ENCODE measurements at regions of chr12 and their contacts with region 1.

Region 1: DNA sequence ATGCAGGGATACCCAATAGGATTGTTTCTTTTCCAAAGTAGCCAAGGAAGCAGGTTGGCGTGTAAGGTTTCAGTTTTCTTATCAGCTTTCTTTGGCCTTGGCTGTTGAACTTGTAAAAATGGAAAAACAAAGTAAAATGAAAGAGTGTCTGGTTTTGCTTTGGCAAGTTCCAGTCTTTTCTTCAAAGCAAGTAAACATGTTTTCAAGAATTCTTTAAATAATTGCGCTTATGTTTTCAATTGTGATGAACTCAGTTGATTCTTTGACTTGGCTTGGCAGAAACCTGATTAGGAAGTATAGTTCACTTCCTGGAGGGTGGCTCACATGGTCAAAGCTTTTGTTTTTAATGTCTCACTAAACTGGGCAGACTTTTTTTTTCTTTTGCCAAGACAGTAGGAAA is 112.2 kb upstream of the USP44 start:
- DNase-seq: peak; percentile 97
- H3K4me3 ChIP-seq: peak overlapping the region in 2 of 3 experiments; percentile 56 to 67
- H3K27ac ChIP-seq: peak overlapping the region; percentile 93
- H3K4me1 ChIP-seq: peaks cover 26% of the 10 kb centered on the region
- H3K27me3 ChIP-seq: no peaks in the 10 kb centered on the region
- CTCF ChIP-seq: no peak
- POLR2A ChIP-seq: peak; percentile 41

Region 2: DNA sequence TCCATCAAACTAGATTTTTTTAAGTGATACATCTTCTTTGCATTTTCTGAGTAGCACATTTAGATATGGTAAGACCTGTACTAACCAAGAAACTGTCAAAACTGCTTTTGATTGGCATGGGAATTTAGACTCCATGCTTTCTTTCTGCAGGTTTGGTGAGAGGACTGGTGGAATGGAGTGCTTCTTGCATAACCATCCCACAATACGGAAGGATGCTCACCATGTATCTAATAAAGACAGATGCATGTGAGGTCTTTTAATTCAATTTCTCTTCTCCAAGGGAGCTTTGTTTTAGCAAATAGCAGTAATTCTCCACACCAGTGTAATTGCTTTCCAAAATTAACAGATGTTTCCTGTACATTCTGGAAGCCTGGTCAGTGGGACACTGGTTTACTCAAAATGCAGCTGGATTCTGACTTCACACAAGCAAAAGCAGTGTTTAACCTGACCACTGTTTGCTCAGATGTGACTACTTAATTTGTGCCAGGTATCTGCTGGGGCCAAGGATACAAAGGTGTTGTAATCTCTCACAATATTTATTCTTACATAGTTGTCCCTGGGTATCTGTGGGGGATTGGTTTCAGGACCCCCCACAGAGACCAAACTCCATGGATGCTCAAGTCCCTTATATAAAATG is 472.3 kb before region 1 on chr12:
- CTCF ChIA-PET with region 1: no interaction called
- POLR2A ChIA-PET with region 1: no interaction called
- dilution Hi-C with region 1: no loop called
- intact Hi-C with region 1: no loop called
- DNase-seq: peak; percentile 62
- H3K4me3 ChIP-seq: no peak overlapping the region
- H3K27ac ChIP-seq: no peak overlapping the region
- H3K4me1 ChIP-seq: peaks cover 3% of the 10 kb centered on the region
- H3K27me3 ChIP-seq: no peaks in the 10 kb centered on the region
- CTCF ChIP-seq: no peak
- POLR2A ChIP-seq: no peak

Region 3: DNA sequence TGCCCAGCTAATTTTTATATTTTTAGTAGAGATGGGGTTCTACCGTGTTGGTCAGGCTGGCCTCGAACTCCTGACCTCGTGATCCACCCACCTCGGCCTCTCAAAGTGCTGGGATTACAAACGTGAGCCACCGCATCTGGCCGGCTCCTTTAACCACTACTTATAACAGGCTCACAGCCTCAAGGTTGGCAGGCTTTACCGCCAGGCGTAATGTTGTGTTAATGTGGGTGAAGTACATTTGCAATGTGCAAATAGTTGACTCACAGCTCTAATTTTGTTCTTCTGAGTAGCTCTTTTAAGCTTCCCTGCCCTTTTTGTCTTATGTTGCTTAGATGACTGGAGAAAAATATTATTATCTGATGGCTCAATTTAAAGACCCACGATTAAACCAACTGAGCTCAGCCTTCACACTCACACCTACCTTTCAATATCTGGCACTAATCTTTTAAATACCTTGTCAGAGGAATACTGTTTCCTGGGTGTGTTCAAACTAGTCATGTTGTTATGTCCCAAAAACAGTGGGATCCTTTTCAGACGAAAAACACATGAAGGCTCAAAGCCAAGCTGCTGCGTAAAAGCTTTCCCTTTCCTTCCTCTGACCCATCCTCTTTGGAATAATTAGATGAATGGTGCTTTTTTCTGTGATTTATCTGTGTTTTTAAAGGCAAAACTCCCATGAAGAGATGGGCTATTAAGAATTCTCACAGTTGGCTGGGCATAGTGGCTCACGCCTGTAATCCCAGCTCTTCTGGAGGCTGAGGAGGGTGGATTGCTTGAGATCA is 55.1 kb before region 1 on chr12:
- CTCF ChIA-PET with region 1: interaction called, 4 read pairs
- POLR2A ChIA-PET with region 1: interaction called, 4 read pairs
- dilution Hi-C with region 1: no loop called
- intact Hi-C with region 1: loop called (anchors 1 kb)
- DNase-seq: peak; percentile 91
- H3K4me3 ChIP-seq: no peak overlapping the region
- H3K27ac ChIP-seq: peak overlapping the region; percentile 91
- H3K4me1 ChIP-seq: peaks cover 74% of the 10 kb centered on the region
- H3K27me3 ChIP-seq: no peaks in the 10 kb centered on the region
- CTCF ChIP-seq: no peak
- POLR2A ChIP-seq: no peak

Region 4: DNA sequence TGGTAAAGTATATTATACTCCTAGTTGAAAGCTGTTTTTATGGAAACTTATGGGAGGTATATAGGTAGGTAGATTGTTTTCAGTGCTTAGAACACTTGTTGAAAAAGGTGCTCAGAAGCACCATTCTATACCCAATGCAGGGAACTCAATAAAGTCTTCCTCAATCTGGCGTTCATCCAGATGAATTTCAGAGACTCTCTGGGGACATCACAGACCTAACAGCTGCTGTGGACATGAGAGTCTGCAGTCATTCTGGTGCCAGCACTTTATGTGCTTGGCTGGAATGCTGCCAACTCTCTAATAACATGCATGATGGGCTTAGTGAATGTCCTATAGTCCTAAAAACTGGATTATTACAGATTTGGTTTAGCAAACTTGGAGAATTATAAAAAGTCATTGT is 11.1 kb after region 1 on chr12:
- CTCF ChIA-PET with region 1: interaction called, 4 read pairs
- POLR2A ChIA-PET with region 1: no interaction called
- dilution Hi-C with region 1: no loop called
- intact Hi-C with region 1: loop called (anchors 1 kb)
- DNase-seq: peak; percentile 87
- H3K4me3 ChIP-seq: no peak overlapping the region
- H3K27ac ChIP-seq: no peak overlapping the region
- H3K4me1 ChIP-seq: peaks cover 4% of the 10 kb centered on the region
- H3K27me3 ChIP-seq: no peaks in the 10 kb centered on the region
- CTCF ChIP-seq: no peak
- POLR2A ChIP-seq: no peak

Measured in endothelial cell of umbilical vein (primary cell).